RWPE1 (cell line): ENCODE measurements at regions of chr6 and their contacts with region 1.

Region 1: DNA sequence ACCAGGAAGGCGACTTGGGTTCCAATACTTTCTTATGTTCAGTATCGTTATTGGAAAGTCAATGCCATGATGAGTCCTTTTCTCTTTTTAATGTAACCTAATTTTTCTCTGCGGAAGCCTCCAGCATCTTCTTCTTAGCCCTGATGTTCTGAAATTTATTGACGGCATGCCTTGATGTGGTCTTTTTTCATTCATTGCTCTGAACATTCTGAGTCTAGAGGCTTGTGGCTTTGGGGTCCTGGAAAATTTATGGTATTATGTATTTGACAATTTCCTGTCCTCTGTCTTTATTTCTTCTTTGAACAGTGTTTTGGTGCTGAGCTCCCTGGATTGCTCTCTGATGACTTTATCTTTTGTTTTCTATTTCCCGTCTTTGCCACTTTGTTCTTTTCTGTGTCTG is 28.7 kb upstream of the MAS1 start:
- DNase-seq: no peak
- H3K27ac ChIP-seq: no peak overlapping the region
- CTCF ChIP-seq: no peak

Region 2: DNA sequence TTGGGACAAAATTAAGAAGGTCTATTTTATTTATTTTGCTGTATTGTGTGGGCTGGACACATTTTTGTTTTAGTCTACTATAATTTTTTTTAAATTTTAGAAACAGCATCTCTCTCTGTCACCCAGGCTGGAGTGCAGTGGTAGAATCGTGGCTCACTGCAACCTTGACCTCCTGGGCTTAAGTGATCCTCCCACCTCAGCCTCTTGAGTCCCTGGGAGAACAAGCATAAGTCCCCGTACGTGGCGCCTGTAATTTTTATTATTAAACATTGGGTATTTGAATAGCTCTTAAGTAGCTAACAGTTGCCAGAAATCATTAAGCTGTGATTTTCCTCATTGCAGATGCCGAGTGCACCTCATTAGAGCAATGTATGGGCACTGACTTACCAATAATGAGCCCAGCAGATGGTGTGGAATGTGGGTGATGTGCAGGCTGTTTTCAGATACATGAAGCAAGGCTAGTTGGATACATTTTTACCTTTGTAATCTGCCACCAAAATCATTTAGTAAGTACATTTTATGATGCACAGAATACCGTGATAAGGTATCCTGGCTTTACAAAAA is 18.4 kb after region 1 on chr6:
- CTCF ChIA-PET with region 1: no interaction called
- POLR2A ChIA-PET with region 1: no interaction called
- DNase-seq: no peak
- H3K27ac ChIP-seq: no peak overlapping the region
- CTCF ChIP-seq: no peak

Region 3: GRCh38 chr6:159941286-159942113 is 79.4 kb after region 1 on chr6:
- CTCF ChIA-PET with region 1: interaction called, 10 read pairs
- POLR2A ChIA-PET with region 1: no interaction called
- DNase-seq: no peak
- H3K27ac ChIP-seq: no peak overlapping the region
- CTCF ChIP-seq: peak; percentile 13; the same call in 1 of the 2 replicates